T-cell (primary cell): ENCODE measurements at regions of chr1 and their contacts with region 1.

Region 1: GRCh38 chr1:111507411-111508201 is 4.2 kb upstream of the ADORA3 start:
- DNase-seq: peak in 34 of 35 experiments; percentile 20 to 65 (median 36)
- ATAC-seq: peak; percentile 63 to 75 (median 70)
- H3K4me3 ChIP-seq: peak overlapping the region; percentile 42 to 44
- H3K4me3 Mint-ChIP-seq: peak overlapping the region; percentile 68 to 75 (median 75)
- H3K27ac ChIP-seq: peak overlapping the region; percentile 90
- H3K27ac Mint-ChIP-seq: peak overlapping the region; percentile 95 to 98
- H3K4me1 ChIP-seq: peaks cover 66 to 88% of the 10 kb centered on the region in 2 experiments
- H3K4me1 Mint-ChIP-seq: peaks cover 56 to 59% (median 57%) of the 10 kb centered on the region in 3 donors
- H3K27me3 ChIP-seq: no peaks in the 10 kb centered on the region
- H3K27me3 Mint-ChIP-seq: no peaks in the 10 kb centered on the region

Region 2: DNA sequence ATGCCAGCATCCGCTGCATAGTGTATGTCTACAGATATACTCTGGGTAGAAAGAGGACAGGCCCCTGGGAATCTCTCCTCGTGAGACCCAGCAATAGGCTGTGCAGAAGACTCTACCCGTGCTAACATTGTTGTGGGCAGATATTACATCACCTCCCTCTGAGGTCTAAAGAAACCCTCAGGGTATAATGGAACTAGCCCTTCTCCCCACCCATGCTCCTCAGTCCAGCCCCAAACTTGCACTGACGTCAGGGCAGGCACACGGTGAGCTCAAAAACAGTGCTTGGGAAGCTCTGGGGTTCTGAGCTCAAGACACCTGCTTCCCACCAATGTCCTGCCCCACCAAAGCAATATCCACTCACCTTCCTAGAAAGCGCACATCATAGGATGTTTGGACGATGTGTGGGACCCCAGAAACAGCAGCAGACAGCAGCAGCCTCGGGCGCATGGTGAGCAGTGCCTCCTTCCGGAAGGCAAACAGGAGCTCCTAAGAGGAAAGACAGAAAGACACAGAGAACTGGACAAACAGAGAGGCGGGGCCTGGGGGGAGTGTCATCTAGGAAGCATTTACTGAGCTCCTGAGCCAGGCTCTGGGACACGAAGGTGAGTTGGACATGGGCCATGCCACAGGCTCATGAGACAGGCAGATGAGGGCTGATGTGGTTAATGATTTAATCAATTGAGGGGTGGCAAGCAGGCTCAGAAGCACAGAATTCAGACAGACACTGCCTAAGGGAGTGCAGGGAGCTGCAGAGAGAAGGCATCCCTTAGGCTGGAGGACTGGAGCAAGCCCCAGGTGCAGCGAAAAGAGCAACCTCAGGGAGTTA is 84.8 kb before region 1 on chr1:
- CTCF ChIA-PET with region 1: no interaction called
- POLR2A ChIA-PET with region 1: no interaction called
- DNase-seq: no peak
- ATAC-seq: no peak
- H3K4me3 ChIP-seq: no peak overlapping the region
- H3K4me3 Mint-ChIP-seq: no peak overlapping the region
- H3K27ac ChIP-seq: no peak overlapping the region
- H3K27ac Mint-ChIP-seq: no peak overlapping the region
- H3K4me1 ChIP-seq: no peaks in the 10 kb centered on the region
- H3K4me1 Mint-ChIP-seq: peaks cover 0 to 8% (median 3%) of the 10 kb centered on the region in 3 donors
- H3K27me3 ChIP-seq: peaks cover 0 to 4% of the 10 kb centered on the region in 2 experiments
- H3K27me3 Mint-ChIP-seq: no peaks in the 10 kb centered on the region

Region 3: DNA sequence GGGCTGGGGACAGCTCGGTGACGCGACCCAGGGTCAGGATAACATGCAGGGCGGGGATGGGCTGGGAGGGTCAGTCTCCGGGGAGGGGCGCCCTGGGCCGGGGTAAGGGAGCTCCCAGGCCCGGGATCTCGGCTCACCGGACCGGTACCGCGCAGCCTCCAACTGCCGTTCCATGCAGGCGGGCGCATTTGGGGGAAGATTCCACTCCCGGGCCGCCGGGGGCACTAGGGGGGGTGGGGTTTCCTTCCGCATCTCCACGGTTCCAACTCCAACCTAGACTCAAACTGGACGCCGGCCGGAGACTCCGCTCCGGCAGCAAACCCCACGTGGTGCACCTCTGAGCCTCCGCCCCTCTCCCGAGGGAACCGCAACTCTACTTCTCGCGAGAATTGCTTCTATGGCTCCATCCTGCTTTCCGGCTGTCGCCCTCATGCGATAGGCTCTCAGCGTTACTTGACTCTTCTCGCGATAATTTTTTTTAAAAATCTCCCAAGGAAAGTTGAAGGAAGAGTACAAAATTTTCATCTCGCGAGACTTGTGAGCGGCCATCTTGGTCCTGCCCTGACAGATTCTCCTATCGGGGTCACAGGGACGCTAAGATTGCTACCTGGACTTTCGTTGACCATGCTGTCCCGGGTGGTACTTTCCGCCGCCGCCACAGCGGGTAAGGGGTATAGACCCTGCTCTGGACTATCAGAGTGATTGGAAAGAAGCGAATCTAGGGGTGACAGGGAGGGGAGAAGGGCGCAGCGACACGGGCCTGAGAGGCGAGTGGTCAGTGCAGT is 58.5 kb before region 1 on chr1 and contains the starts of genes ATP5PB and WDR77:
- CTCF ChIA-PET with region 1: interaction called in 1 of 2 experiments, 13 read pairs
- POLR2A ChIA-PET with region 1: no interaction called
- DNase-seq: peak; percentile 69 to 97 (median 86)
- ATAC-seq: peak; percentile 96 to 97 (median 97)
- H3K4me3 ChIP-seq: peak within 1 kb of the TSS; percentile 81 to 96
- H3K4me3 Mint-ChIP-seq: peak within 1 kb of the TSS; percentile 100
- H3K27ac ChIP-seq: peak within 1 kb of the TSS; percentile 74
- H3K27ac Mint-ChIP-seq: peak within 1 kb of the TSS; percentile 99 to 100
- H3K4me1 ChIP-seq: peaks cover 32 to 38% of the 10 kb centered on the region in 2 experiments
- H3K4me1 Mint-ChIP-seq: peaks cover 79 to 88% (median 87%) of the 10 kb centered on the region in 3 donors
- H3K27me3 ChIP-seq: no peaks in the 10 kb centered on the region
- H3K27me3 Mint-ChIP-seq: no peaks in the 10 kb centered on the region
- total RNA-seq, gene ATP5PB: 88.1 to 129 (median 118) TPM
- total RNA-seq, gene WDR77: 22.5 to 40.1 (median 33.1) TPM

Region 4: GRCh38 chr1:111497592-111497991 is 10.0 kb before region 1 on chr1:
- CTCF ChIA-PET with region 1: interaction called, 5 to 42 read pairs
- POLR2A ChIA-PET with region 1: interaction called in 1 of 2 experiments, 6 read pairs
- DNase-seq: no peak
- ATAC-seq: no peak
- H3K4me3 ChIP-seq: no peak overlapping the region
- H3K4me3 Mint-ChIP-seq: no peak overlapping the region
- H3K27ac ChIP-seq: no peak overlapping the region
- H3K27ac Mint-ChIP-seq: no peak overlapping the region
- H3K4me1 ChIP-seq: peaks cover under 1 to 2% of the 10 kb centered on the region in 2 experiments
- H3K4me1 Mint-ChIP-seq: peaks cover 15 to 26% (median 17%) of the 10 kb centered on the region in 3 donors
- H3K27me3 ChIP-seq: no peaks in the 10 kb centered on the region
- H3K27me3 Mint-ChIP-seq: no peaks in the 10 kb centered on the region

Region 5: DNA sequence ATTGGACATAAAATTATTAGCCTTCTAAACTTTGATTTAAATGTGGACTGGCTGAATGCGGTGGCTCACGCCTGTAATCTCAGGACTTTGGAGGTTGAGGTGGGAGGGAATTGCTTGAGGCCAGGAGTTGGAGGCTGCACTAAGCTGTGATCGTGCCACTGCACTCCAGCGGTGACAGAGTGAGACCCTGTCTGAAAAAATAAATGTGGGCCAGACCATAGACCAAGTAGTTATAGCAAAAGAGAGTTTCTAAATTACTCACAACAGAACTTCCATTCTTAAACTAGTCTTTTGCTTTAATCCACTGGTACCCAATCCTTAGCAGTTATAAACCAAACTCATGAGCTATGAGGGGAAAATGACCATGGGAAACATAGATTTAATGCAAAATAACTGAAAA is 147.2 kb after region 1 on chr1:
- CTCF ChIA-PET with region 1: interaction called in 1 of 2 experiments, 12 read pairs
- POLR2A ChIA-PET with region 1: no interaction called
- DNase-seq: no peak
- ATAC-seq: no peak
- H3K4me3 ChIP-seq: no peak overlapping the region
- H3K4me3 Mint-ChIP-seq: no peak overlapping the region
- H3K27ac ChIP-seq: no peak overlapping the region
- H3K27ac Mint-ChIP-seq: peak overlapping the region; percentile 52 to 60
- H3K4me1 ChIP-seq: peaks cover 28 to 43% of the 10 kb centered on the region in 2 experiments
- H3K4me1 Mint-ChIP-seq: peaks cover 61 to 66% (median 65%) of the 10 kb centered on the region in 3 donors
- H3K27me3 ChIP-seq: no peaks in the 10 kb centered on the region
- H3K27me3 Mint-ChIP-seq: no peaks in the 10 kb centered on the region

Region 6: GRCh38 chr1:111707906-111708305 is 200.3 kb after region 1 on chr1:
- CTCF ChIA-PET with region 1: interaction called, 3 to 22 read pairs
- POLR2A ChIA-PET with region 1: no interaction called
- DNase-seq: no peak
- ATAC-seq: no peak
- H3K4me3 ChIP-seq: no peak overlapping the region
- H3K4me3 Mint-ChIP-seq: no peak overlapping the region
- H3K27ac ChIP-seq: no peak overlapping the region
- H3K27ac Mint-ChIP-seq: peak overlapping the region; percentile 48 to 72
- H3K4me1 ChIP-seq: no peaks in the 10 kb centered on the region
- H3K4me1 Mint-ChIP-seq: peaks cover 7 to 17% (median 15%) of the 10 kb centered on the region in 3 donors
- H3K27me3 ChIP-seq: no peaks in the 10 kb centered on the region
- H3K27me3 Mint-ChIP-seq: no peaks in the 10 kb centered on the region

Region 7: DNA sequence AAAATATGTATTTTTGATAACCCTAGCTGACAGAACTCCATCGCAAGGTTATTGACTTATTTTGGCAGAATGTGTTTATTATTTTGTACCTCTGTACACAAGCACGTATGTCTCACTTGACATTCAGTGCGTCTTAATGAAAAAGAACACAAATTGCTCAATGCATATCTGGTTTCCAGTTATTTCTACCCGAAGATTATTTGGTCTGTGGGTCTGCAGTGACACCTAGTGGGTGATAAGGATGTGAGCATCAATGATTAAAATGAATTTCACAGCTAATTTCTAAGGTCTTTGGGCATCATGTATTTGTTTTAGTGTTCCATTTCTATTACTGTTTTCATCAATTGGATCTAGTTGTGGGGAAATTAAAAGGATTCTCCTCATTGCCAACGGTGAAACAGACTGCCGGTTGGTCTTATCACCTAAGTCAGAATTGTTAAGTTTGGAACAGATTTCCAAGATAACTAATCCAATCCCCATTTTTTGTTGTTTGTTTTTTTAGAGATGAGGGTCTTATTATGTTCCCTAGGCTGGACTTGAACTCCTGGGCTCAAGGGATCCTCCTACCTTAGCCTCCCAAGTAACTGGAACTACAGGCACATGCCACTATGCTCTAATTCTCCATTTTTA is 262.0 kb after region 1 on chr1:
- CTCF ChIA-PET with region 1: interaction called, 4 to 28 read pairs
- POLR2A ChIA-PET with region 1: no interaction called
- DNase-seq: peak in 31 of 35 experiments; percentile 9 to 84 (median 45)
- ATAC-seq: peak; percentile 32 to 69 (median 50)
- H3K4me3 ChIP-seq: no peak overlapping the region
- H3K4me3 Mint-ChIP-seq: no peak overlapping the region
- H3K27ac ChIP-seq: no peak overlapping the region
- H3K27ac Mint-ChIP-seq: peak overlapping the region in 1 of 2 donors; percentile 16
- H3K4me1 ChIP-seq: no peaks in the 10 kb centered on the region
- H3K4me1 Mint-ChIP-seq: peaks cover 0 to 8% (median 2%) of the 10 kb centered on the region in 3 donors
- H3K27me3 ChIP-seq: no peaks in the 10 kb centered on the region
- H3K27me3 Mint-ChIP-seq: no peaks in the 10 kb centered on the region